ENCODE measurements at regions of chr2 and their contacts with region 1.

Region 1: GRCh38 chr2:118855451-118856279 is 8.2 kb upstream of the EN1 start:
- DNase-seq: peak; percentile 68 to 78 (median 72)
- H3K4me3 ChIP-seq: peak overlapping the region; percentile 43
- H3K4me3 Mint-ChIP-seq: peak overlapping the region; percentile 49 to 83 (median 73)
- H3K27ac ChIP-seq: no peak overlapping the region
- H3K27ac Mint-ChIP-seq: peak overlapping the region in 1 of 8 donors; percentile 77
- H3K4me1 ChIP-seq: peaks cover 11% of the 10 kb centered on the region
- H3K4me1 Mint-ChIP-seq: peaks cover 12 to 29% (median 17%) of the 10 kb centered on the region in 3 donors
- H3K27me3 ChIP-seq: peaks cover 45% of the 10 kb centered on the region
- H3K27me3 Mint-ChIP-seq: peaks cover 74 to 79% of the 10 kb centered on the region in 2 donors

Region 2: GRCh38 chr2:118046634-118047210 is 808.9 kb before region 1 on chr2:
- CTCF ChIA-PET with region 1: interaction called, 23 read pairs
- POLR2A ChIA-PET with region 1: no interaction called
- DNase-seq: peak in 2 of 5 donors; percentile 9 to 16
- H3K4me3 ChIP-seq: no peak overlapping the region
- H3K4me3 Mint-ChIP-seq: no peak overlapping the region
- H3K27ac ChIP-seq: no peak overlapping the region
- H3K27ac Mint-ChIP-seq: no peak overlapping the region
- H3K4me1 ChIP-seq: no peaks in the 10 kb centered on the region
- H3K4me1 Mint-ChIP-seq: no peaks in the 10 kb centered on the region
- H3K27me3 ChIP-seq: peaks cover 20% of the 10 kb centered on the region
- H3K27me3 Mint-ChIP-seq: peaks cover 11 to 85% of the 10 kb centered on the region in 2 donors

Region 3: DNA sequence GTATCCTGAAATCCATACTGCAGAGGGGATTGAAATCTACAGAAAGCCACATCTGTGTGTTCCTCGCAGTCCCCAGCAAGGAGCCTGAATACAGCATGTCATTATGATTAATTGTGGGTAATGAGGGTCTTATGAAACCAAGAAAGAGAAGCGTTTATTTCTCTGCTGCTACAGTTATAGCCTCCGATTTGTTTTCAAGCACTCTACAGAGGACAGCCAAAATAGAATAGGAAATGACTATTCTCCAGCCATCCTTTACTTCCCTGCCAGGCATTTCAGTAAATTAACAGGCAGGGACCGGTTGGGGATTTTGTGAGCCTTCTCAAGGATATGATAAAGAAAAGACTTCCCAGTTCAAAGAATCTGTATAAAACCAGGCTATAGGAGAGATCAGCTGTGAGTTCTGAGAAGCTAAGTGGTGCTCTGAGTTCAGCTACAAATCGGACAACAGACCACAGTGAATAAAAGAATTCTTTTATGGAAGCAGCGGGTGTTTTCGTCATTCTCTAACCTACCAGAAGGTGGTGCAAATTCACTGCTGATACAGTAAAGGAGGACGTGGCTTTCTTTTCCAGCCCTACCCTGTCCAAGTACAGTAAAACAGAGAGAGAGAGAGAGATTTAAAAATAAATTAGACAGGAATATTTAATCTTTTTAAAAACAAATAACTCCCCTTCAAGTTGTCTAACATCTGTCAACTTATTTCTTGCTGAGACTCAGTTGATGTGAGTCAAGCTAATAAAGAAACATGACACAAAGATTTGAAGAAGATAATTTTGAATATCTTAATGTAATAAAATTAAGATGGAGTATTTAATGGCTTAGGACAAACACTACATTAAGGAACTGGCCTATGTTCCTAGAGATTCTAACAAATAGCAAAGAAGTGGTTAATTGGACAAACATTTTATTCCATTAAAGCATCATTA is 633.7 kb before region 1 on chr2:
- CTCF ChIA-PET with region 1: interaction called, 24 read pairs
- POLR2A ChIA-PET with region 1: no interaction called
- DNase-seq: peak in 3 of 5 donors; percentile 6 to 48 (median 37)
- H3K4me3 ChIP-seq: no peak overlapping the region
- H3K4me3 Mint-ChIP-seq: peak overlapping the region in 2 of 7 donors; percentile 29 to 41
- H3K27ac ChIP-seq: no peak overlapping the region
- H3K27ac Mint-ChIP-seq: no peak overlapping the region
- H3K4me1 ChIP-seq: peaks cover 14% of the 10 kb centered on the region
- H3K4me1 Mint-ChIP-seq: peaks cover 19 to 29% (median 25%) of the 10 kb centered on the region in 3 donors
- H3K27me3 ChIP-seq: peaks cover 54% of the 10 kb centered on the region
- H3K27me3 Mint-ChIP-seq: peaks cover 38 to 76% of the 10 kb centered on the region in 2 donors

Measured in CD8-positive, alpha-beta memory T cell (primary cell).